GM12878 (cell line): ENCODE measurements at regions of chr14 and their contacts with region 1.

Region 1: DNA sequence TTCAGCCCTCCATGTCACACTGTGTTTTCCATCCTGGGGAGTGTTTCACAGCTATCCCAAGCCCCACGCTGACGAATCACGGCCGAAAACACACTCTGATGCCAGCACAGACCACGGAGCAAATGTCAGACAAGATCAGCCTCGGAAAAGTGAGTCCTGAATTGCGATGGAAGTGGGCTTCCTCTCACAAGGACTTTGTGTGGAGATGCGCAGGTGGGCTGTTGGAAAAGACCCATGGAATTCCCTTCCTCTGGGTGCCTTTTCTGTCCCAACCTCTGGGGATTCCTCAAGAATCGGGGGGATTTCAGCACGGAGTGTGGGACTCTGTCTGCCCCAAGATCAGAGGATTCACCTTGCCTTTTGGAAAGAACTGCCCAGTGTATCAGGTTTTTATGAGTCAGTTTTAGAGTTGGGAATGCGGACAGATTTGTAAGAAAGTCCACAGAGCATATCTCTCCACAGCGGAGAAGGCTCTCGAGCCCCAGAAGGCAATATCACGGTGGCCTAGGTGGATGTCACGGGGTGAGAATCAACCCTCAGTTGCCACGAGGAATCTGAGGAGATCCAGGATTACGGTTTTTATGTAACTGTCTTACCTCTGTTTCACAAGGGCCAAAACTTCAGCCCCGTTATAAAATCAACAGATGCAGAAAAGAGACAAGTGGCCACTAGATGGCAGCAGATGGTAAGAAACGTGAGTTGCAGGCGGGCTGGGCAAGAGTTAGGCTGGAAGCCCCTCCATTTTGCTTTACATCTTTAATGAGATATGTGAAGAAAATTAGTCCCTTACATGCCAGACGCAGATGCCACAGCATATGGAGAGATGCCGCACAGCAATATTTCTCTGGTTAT is 201.9 kb downstream of the DAD1 start:
- DNase-seq: peak; percentile 77
- ATAC-seq: peak; percentile 18
- H3K4me3 ChIP-seq: no peak overlapping the region
- H3K27ac ChIP-seq: no peak overlapping the region
- H3K4me1 ChIP-seq: peaks cover 69% of the 10 kb centered on the region
- H3K27me3 ChIP-seq: no peaks in the 10 kb centered on the region
- CTCF ChIP-seq: peak; percentile 67 to 87 (median 79)
- EP300 ChIP-seq: no peak
- POLR2A ChIP-seq: no peak
- RAD21 ChIP-seq: peak; percentile 98

Region 2: GRCh38 chr14:22319526-22320361 is 67.4 kb before region 1 on chr14:
- CTCF ChIA-PET with region 1: interaction called, 103 read pairs
- POLR2A ChIA-PET with region 1: interaction called, 3 read pairs
- RAD21 ChIA-PET with region 1: interaction called, 80 read pairs
- SMC1A ChIA-PET with region 1: interaction called, 59 read pairs
- in situ Hi-C with region 1: loop called (anchors 5 kb)
- intact Hi-C with region 1: no loop called
- DNase-seq: peak; percentile 42
- ATAC-seq: peak; percentile 97
- H3K4me3 ChIP-seq: no peak overlapping the region
- H3K27ac ChIP-seq: no peak overlapping the region
- H3K4me1 ChIP-seq: no peaks in the 10 kb centered on the region
- H3K27me3 ChIP-seq: no peaks in the 10 kb centered on the region
- CTCF ChIP-seq: peak; percentile 68 to 80 (median 73); a peak in 5 of 6 replicates
- EP300 ChIP-seq: no peak
- POLR2A ChIP-seq: no peak
- RAD21 ChIP-seq: peak; percentile 83

Region 3: GRCh38 chr14:22460461-22461195 is 73.5 kb after region 1 on chr14:
- CTCF ChIA-PET with region 1: interaction called, 104 read pairs
- POLR2A ChIA-PET with region 1: interaction called, 10 read pairs
- RAD21 ChIA-PET with region 1: interaction called, 49 read pairs
- SMC1A ChIA-PET with region 1: interaction called, 912 read pairs
- in situ Hi-C with region 1: no loop called
- intact Hi-C with region 1: no loop called
- DNase-seq: no peak
- ATAC-seq: peak; percentile 55
- H3K4me3 ChIP-seq: no peak overlapping the region
- H3K27ac ChIP-seq: peak overlapping the region; percentile 69
- H3K4me1 ChIP-seq: peaks cover 61% of the 10 kb centered on the region
- H3K27me3 ChIP-seq: no peaks in the 10 kb centered on the region
- CTCF ChIP-seq: no peak
- EP300 ChIP-seq: peak; percentile 67 to 69
- POLR2A ChIP-seq: no peak
- RAD21 ChIP-seq: no peak

Region 4: GRCh38 chr14:22491683-22492621 is 104.8 kb after region 1 on chr14:
- CTCF ChIA-PET with region 1: interaction called, 6 read pairs
- POLR2A ChIA-PET with region 1: interaction called, 11 read pairs
- RAD21 ChIA-PET with region 1: interaction called, 272 read pairs
- SMC1A ChIA-PET with region 1: interaction called, 16 read pairs
- in situ Hi-C with region 1: no loop called
- intact Hi-C with region 1: no loop called
- DNase-seq: no peak
- ATAC-seq: peak; percentile 57
- H3K4me3 ChIP-seq: peak overlapping the region; percentile 45
- H3K27ac ChIP-seq: peak overlapping the region; percentile 98
- H3K4me1 ChIP-seq: peaks cover 86% of the 10 kb centered on the region
- H3K27me3 ChIP-seq: no peaks in the 10 kb centered on the region
- CTCF ChIP-seq: no peak
- EP300 ChIP-seq: peak; percentile 69 to 92; a peak in 3 of 4 replicates
- POLR2A ChIP-seq: peak; percentile 68
- RAD21 ChIP-seq: peak; percentile 26; the same call in 1 of the 2 replicates

Region 5: GRCh38 chr14:22531451-22532344 is 144.5 kb after region 1 on chr14:
- CTCF ChIA-PET with region 1: interaction called, 4 read pairs
- POLR2A ChIA-PET with region 1: interaction called, 14 read pairs
- RAD21 ChIA-PET with region 1: interaction called, 7 read pairs
- SMC1A ChIA-PET with region 1: interaction called, 23 read pairs
- in situ Hi-C with region 1: no loop called
- intact Hi-C with region 1: no loop called
- DNase-seq: peak; percentile 93
- ATAC-seq: peak; percentile 70
- H3K4me3 ChIP-seq: peak overlapping the region; percentile 67
- H3K27ac ChIP-seq: peak overlapping the region; percentile 97
- H3K4me1 ChIP-seq: peaks cover 72% of the 10 kb centered on the region
- H3K27me3 ChIP-seq: no peaks in the 10 kb centered on the region
- CTCF ChIP-seq: no peak
- EP300 ChIP-seq: peak in 1 of 2 experiments; percentile 93; a peak in 2 of 4 replicates
- POLR2A ChIP-seq: peak; percentile 67
- RAD21 ChIP-seq: 0 out of 2 replicates have a peak, but pooled peaks have one; percentile 5

Region 6: GRCh38 chr14:22614224-22614799 is 227.2 kb after region 1 on chr14:
- CTCF ChIA-PET with region 1: no interaction called
- POLR2A ChIA-PET with region 1: no interaction called
- RAD21 ChIA-PET with region 1: no interaction called
- SMC1A ChIA-PET with region 1: no interaction called
- in situ Hi-C with region 1: no loop called
- intact Hi-C with region 1: no loop called
- DNase-seq: no peak
- ATAC-seq: peak; percentile 41; the same call in 2 of the 3 replicates
- H3K4me3 ChIP-seq: no peak overlapping the region
- H3K27ac ChIP-seq: no peak overlapping the region
- H3K4me1 ChIP-seq: peaks cover 5% of the 10 kb centered on the region
- H3K27me3 ChIP-seq: no peaks in the 10 kb centered on the region
- CTCF ChIP-seq: no peak
- EP300 ChIP-seq: no peak
- POLR2A ChIP-seq: no peak
- RAD21 ChIP-seq: no peak

Region 7: GRCh38 chr14:22852940-22853767 is 466.0 kb after region 1 on chr14:
- CTCF ChIA-PET with region 1: interaction called, 9 read pairs
- POLR2A ChIA-PET with region 1: no interaction called
- RAD21 ChIA-PET with region 1: interaction called, 3 read pairs
- SMC1A ChIA-PET with region 1: interaction called, 7 read pairs
- in situ Hi-C with region 1: loop called (anchors 10 kb)
- intact Hi-C with region 1: loop called (anchors 2 kb)
- DNase-seq: peak; percentile 63
- ATAC-seq: peak; percentile 95
- H3K4me3 ChIP-seq: peak overlapping the region; percentile 75
- H3K27ac ChIP-seq: peak overlapping the region; percentile 89
- H3K4me1 ChIP-seq: peaks cover 17% of the 10 kb centered on the region
- H3K27me3 ChIP-seq: no peaks in the 10 kb centered on the region
- CTCF ChIP-seq: peak; percentile 85 to 98 (median 93)
- EP300 ChIP-seq: no peak
- POLR2A ChIP-seq: no peak
- RAD21 ChIP-seq: peak; percentile 98